ENCODE measurements at regions of chr16 and their contacts with region 1.

Region 1: DNA sequence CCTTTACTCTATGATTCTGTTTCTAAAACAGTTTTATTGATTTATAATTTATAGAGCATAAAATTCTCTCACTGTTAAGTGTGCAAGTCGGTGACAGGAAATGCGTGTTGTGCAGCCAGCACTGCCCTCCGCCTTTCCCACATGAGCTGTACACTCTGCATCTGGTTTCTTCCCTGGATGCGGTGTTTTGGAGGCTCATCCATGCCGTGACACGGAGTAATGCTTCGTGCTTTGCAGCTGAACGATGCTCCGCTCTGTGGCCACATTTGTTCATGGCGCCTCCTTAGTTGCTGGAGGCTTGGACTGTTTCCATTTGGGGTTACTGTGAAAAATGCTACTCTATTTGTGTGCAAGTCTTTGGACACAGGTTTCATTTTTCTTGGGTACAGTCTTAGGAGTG is 7.2 kb upstream of the IGFALS start:
- DNase-seq: no peak
- ATAC-seq: no peak
- H3K4me3 ChIP-seq: no peak overlapping the region
- H3K27ac ChIP-seq: no peak overlapping the region
- H3K4me1 ChIP-seq: no peaks in the 10 kb centered on the region
- CTCF ChIP-seq: no peak
- EP300 ChIP-seq: no peak
- POLR2A ChIP-seq: no peak
- RAD21 ChIP-seq: no peak

Region 2: GRCh38 chr16:1812732-1813163 is 12.0 kb after region 1 on chr16:
- CTCF ChIA-PET with region 1: interaction called, 15 read pairs
- POLR2A ChIA-PET with region 1: no interaction called
- DNase-seq: peak; percentile 66 to 80
- ATAC-seq: peak; percentile 94 to 96
- H3K4me3 ChIP-seq: no peak overlapping the region
- H3K27ac ChIP-seq: peak overlapping the region in 1 of 2 experiments; percentile 30; a peak in 1 of 6 replicates
- H3K4me1 ChIP-seq: peaks cover 10% of the 10 kb centered on the region; the same call in 1 of the 3 replicates
- CTCF ChIP-seq: peak; percentile 62
- EP300 ChIP-seq: no peak
- POLR2A ChIP-seq: no peak
- RAD21 ChIP-seq: peak; percentile 65 to 80

Region 3: DNA sequence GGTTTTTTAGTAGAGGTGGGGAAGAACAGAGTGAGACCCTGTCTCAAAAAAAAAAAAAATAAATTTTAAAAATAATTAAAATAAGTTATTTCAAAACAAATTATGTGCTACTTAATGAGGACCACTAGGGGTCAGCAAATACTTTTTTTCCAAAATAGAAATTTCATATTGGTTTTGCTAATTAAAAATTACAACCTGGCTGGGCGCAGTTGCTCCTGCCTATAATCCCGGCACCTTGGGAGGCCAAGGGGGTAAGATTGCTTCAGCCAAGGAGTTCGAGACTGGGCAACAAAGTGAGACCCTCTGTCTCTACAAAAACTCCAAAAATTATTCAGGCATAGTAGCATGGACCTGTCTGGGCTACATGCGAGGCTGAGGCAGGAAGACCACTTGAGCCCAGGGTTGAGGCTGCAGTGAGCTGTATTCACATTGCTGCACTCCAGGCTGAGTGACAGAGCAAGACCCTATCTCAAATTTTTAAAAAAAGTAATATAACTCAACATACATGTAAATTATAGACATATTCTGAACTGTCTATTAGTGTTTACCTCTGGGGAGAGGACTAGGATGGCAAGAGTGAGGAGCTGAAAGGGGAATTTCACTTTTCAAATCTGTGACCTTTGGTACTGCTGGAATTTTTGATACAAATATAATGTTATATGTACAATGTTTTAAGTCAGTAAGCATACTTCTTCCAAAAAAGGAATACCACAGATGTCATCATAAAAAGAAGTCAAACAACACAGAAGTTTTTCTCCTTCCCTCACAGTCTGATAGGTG is 63.2 kb after region 1 on chr16:
- CTCF ChIA-PET with region 1: no interaction called
- POLR2A ChIA-PET with region 1: no interaction called
- DNase-seq: peak in 1 of 2 experiments; percentile 44
- ATAC-seq: peak; percentile 66 to 74; a peak in 5 of 6 replicates
- H3K4me3 ChIP-seq: no peak overlapping the region
- H3K27ac ChIP-seq: peak overlapping the region; percentile 37 to 67; a peak in 5 of 6 replicates
- H3K4me1 ChIP-seq: peaks cover 26% of the 10 kb centered on the region
- CTCF ChIP-seq: peak; percentile 84
- EP300 ChIP-seq: no peak
- POLR2A ChIP-seq: no peak
- RAD21 ChIP-seq: peak; percentile 75 to 90

Region 4: DNA sequence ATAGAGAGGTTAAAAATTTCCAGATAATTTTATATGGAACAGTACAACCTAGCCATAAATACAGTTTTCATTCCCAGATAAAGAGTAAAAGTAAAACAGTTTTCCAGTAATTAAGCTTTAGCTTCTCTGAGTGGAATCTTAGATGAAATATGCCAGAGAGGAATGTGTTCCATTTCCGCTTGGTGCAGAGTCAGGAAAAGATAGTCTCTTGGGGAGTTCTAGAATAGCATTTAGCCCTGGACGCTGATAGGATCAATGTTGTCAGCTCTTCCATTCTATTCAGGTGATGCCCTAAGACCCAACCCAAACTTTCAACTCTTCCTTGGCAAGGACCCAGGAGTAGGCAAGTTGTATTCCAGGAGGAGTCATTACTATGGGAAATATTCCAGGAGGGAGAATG is 570.7 kb after region 1 on chr16:
- CTCF ChIA-PET with region 1: no interaction called
- POLR2A ChIA-PET with region 1: no interaction called
- DNase-seq: no peak
- ATAC-seq: no peak
- H3K4me3 ChIP-seq: no peak overlapping the region
- H3K27ac ChIP-seq: no peak overlapping the region
- H3K4me1 ChIP-seq: no peaks in the 10 kb centered on the region
- CTCF ChIP-seq: no peak
- EP300 ChIP-seq: no peak
- POLR2A ChIP-seq: no peak
- RAD21 ChIP-seq: no peak